MCF 10A (cell line): ENCODE measurements at regions of chr15 and their contacts with region 1.

Region 1: DNA sequence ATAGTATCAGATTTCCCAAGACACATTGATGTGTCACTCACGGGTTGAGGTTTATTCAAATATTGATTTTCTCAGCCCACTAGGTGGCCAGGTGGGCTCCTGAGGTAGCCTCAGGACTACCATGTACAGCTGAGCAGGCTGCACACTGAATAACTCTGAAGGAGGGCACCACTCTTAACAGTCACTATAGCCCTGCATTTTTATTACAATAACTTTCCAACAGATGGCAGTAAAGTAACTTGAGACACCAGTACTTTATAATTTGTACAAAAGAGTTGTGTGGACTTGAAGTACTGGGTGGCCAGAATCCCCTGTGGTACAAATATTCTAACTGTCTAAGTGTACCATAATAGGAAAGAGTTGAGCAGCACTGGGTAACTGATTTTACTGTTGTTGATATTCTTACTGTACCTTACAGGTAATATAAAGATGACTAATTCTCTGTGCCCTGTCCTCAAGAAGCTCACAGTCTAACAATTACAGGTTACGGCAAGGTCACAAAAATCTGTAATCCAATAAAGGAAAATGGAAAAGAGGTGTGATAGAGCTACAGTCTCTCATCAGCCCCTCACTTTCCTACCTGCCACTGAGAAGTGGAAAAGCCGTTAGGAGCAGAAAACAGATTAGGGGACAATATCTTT is 76.0 kb downstream of the ETFA start:
- DNase-seq: peak; percentile 42
- H3K4me3 Mint-ChIP-seq: no peak overlapping the region
- H3K27ac Mint-ChIP-seq: no peak overlapping the region
- H3K4me1 Mint-ChIP-seq: peaks cover 6% of the 10 kb centered on the region
- H3K27me3 Mint-ChIP-seq: no peaks in the 10 kb centered on the region
- CTCF ChIP-seq: peak; percentile 34

Region 2: GRCh38 chr15:76330080-76330680 is 94.9 kb after region 1 on chr15:
- CTCF ChIA-PET with region 1: interaction called, 3 read pairs
- POLR2A ChIA-PET with region 1: no interaction called
- intact Hi-C with region 1: loop called (anchors 1 kb)
- DNase-seq: peak; percentile 72
- H3K4me3 Mint-ChIP-seq: no peak overlapping the region
- H3K27ac Mint-ChIP-seq: no peak overlapping the region
- H3K4me1 Mint-ChIP-seq: no peaks in the 10 kb centered on the region
- H3K27me3 Mint-ChIP-seq: no peaks in the 10 kb centered on the region
- CTCF ChIP-seq: peak; percentile 44

Region 3: DNA sequence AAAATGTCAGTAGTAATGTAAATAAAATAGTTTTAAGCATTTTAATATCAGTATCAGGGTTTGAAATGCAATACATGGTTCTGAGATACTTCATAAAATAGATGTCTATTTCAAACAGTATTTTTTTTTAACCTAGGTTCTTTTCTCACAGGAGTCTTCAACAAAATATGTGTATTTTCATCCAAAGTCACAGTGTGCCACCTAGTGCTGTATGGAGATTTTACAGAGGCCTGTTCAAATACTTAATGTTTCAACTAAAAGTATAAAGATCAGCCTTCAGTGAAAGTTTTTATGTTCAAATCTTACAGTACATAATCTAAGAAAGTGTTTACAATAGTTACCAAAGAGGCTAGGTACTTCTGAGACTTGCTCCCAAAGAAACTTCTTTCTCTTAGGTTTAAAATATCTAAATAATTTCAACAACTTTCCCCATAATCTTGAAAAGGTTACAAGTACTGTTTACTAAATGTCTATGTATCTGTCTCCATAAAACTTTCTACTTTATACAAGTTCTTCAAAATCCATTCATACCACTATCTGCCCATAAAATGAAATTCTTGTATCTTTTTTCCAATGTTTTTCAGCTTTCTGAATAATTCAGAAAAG is 631.5 kb after region 1 on chr15:
- CTCF ChIA-PET with region 1: interaction called, 13 read pairs
- POLR2A ChIA-PET with region 1: no interaction called
- intact Hi-C with region 1: loop called (anchors 1 kb)
- DNase-seq: peak; percentile 27
- H3K4me3 Mint-ChIP-seq: no peak overlapping the region
- H3K27ac Mint-ChIP-seq: no peak overlapping the region
- H3K4me1 Mint-ChIP-seq: no peaks in the 10 kb centered on the region
- H3K27me3 Mint-ChIP-seq: no peaks in the 10 kb centered on the region
- CTCF ChIP-seq: peak; percentile 37